Activated B cell treated with CpG ODN at 0.5 μM for 24 hours (primary cell): ENCODE measurements at regions of chr3 and their contacts with region 1.

Region 1: GRCh38 chr3:69686056-69686455 is 53.2 kb upstream of the MITF start:
- DNase-seq: no peak
- ATAC-seq: no peak
- H3K4me3 Mint-ChIP-seq: no peak overlapping the region
- H3K27ac Mint-ChIP-seq: no peak overlapping the region
- H3K4me1 Mint-ChIP-seq: no peaks in the 10 kb centered on the region
- H3K27me3 Mint-ChIP-seq: peaks cover 5% of the 10 kb centered on the region
- CTCF ChIP-seq: no peak

Region 2: DNA sequence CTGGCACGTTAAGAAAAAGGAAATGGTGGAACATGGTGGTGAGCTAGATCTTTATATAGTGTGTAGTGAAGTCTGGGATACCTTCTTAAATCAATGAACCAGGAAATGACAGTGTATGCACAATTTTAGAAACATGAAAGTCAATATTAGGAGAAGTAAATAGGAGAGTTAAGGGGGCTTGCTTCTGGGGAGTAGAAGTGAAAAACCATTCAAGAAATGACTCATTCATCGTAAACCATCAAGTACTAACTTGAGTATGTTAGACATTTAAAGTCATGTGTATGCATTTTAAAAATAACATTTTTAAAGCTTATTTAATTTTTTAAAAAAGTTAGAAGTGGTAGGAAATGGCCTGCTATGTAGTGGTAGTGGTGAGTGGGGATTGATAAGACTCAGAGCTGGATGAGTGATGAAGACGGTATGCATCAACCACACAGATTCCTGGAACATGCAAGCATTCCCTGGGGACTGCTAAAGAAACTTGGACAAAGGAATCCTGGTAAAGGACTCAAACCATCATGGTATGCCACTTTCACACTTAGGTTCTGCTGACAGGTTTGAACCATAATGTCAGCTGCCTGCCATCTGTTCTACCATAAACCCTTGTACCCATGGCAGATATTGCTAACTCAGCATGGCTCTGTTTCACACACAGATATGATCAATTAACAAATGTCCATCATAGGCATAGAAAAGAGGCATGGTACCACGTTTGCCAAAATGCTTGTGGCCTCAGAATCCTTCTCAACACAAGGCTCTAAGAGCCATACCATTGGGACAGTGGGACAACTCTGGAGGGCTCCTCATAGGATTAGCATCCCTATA is 24.3 kb after region 1 on chr3:
- CTCF ChIA-PET with region 1: no interaction called
- POLR2A ChIA-PET with region 1: no interaction called
- intact Hi-C with region 1: no loop called
- DNase-seq: no peak
- ATAC-seq: no peak
- H3K4me3 Mint-ChIP-seq: no peak overlapping the region
- H3K27ac Mint-ChIP-seq: no peak overlapping the region
- H3K4me1 Mint-ChIP-seq: no peaks in the 10 kb centered on the region
- H3K27me3 Mint-ChIP-seq: peaks cover 2% of the 10 kb centered on the region
- CTCF ChIP-seq: no peak

Region 3: GRCh38 chr3:69781593-69781992 is 95.5 kb after region 1 on chr3:
- CTCF ChIA-PET with region 1: no interaction called
- POLR2A ChIA-PET with region 1: no interaction called
- intact Hi-C with region 1: no loop called
- DNase-seq: no peak
- ATAC-seq: no peak
- H3K4me3 Mint-ChIP-seq: no peak overlapping the region
- H3K27ac Mint-ChIP-seq: no peak overlapping the region
- H3K4me1 Mint-ChIP-seq: no peaks in the 10 kb centered on the region
- H3K27me3 Mint-ChIP-seq: peaks cover 3% of the 10 kb centered on the region
- CTCF ChIP-seq: no peak

Region 4: DNA sequence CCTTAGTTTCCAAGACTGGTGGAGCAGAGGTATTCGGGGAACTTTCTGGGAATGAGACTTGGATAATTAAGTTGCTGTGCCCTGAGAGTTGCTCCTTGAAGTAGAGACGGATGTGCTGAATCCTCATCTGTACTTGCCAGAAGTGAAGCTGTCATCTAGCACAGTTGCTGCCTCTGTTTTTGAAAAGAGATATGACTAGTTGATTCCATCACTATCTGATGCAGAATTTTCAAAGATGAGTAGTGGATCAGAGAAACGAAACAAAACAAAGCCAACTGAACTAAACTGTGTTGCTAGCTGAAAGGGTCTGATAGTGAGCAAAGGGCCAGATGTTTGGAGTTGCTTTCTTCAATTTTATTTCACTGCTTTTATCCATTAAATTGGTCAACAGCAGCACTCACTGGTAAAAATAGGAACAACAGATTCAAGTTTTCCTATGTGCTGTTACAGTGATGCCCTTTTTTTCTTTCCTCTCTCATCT is 105.9 kb after region 1 on chr3:
- CTCF ChIA-PET with region 1: no interaction called
- POLR2A ChIA-PET with region 1: no interaction called
- intact Hi-C with region 1: no loop called
- DNase-seq: no peak
- ATAC-seq: no peak
- H3K4me3 Mint-ChIP-seq: no peak overlapping the region
- H3K27ac Mint-ChIP-seq: no peak overlapping the region
- H3K4me1 Mint-ChIP-seq: no peaks in the 10 kb centered on the region
- H3K27me3 Mint-ChIP-seq: no peaks in the 10 kb centered on the region
- CTCF ChIP-seq: no peak

Region 5: GRCh38 chr3:69806735-69807438 is 120.8 kb after region 1 on chr3:
- CTCF ChIA-PET with region 1: no interaction called
- POLR2A ChIA-PET with region 1: no interaction called
- intact Hi-C with region 1: no loop called
- DNase-seq: no peak
- ATAC-seq: no peak
- H3K4me3 Mint-ChIP-seq: no peak overlapping the region
- H3K27ac Mint-ChIP-seq: no peak overlapping the region
- H3K4me1 Mint-ChIP-seq: no peaks in the 10 kb centered on the region
- H3K27me3 Mint-ChIP-seq: peaks cover 6% of the 10 kb centered on the region
- CTCF ChIP-seq: no peak

Region 6: DNA sequence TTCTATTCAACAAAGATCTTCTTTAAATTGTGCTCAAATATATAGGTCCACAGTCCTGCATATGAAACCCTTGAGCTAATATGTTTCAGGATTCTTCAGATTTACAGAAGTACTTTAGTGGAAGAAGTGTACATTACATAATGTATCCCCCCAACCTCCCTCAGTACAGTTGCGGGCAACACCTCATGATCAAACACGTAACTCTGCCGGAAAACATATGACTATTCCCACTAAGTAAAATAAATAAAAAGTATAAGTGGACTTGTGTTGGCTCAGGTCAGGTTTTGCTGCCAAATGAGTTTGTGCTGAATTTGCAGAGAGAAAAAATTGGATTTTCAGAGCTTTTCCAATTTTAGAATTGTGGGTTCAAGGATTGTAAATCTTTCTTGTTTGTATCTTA is 894.0 kb after region 1 on chr3:
- CTCF ChIA-PET with region 1: no interaction called
- POLR2A ChIA-PET with region 1: no interaction called
- intact Hi-C with region 1: loop called (anchors 5 kb)
- DNase-seq: no peak
- ATAC-seq: no peak
- H3K4me3 Mint-ChIP-seq: no peak overlapping the region
- H3K27ac Mint-ChIP-seq: no peak overlapping the region
- H3K4me1 Mint-ChIP-seq: no peaks in the 10 kb centered on the region
- H3K27me3 Mint-ChIP-seq: peaks cover 23% of the 10 kb centered on the region
- CTCF ChIP-seq: no peak